Astrocyte of the cerebellum (primary cell): ENCODE measurements at regions of chr2 and their contacts with region 1.

Region 1: GRCh38 chr2:74876081-74876886 is 42.4 kb downstream of the HK2 start:
- DNase-seq: no peak
- H3K4me3 ChIP-seq: no peak overlapping the region
- CTCF ChIP-seq: peak; percentile 52

Region 2: DNA sequence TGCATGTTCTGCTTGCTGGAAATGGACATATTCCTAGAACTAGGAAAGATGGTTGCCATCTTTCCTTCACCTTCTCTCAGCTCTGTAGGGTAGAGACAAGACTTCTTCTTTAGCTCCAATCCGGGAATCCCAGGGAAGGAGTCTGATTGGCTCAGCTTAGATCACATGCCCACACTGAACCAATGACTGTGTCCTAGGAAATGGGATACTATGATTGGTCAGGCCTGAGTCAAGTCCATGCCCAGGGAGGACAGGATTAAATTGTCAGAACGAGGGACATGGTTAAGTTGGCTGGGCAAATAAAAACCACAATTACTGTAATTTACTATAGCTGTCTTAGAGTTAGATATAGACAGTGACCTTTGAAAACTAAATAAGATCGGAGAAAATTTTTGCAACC is 190.9 kb before region 1 on chr2:
- in situ Hi-C with region 1: loop called (anchors 5 kb)
- DNase-seq: no peak
- H3K4me3 ChIP-seq: no peak overlapping the region
- CTCF ChIP-seq: no peak

Region 3: GRCh38 chr2:75064691-75065396 is 188.6 kb after region 1 on chr2:
- in situ Hi-C with region 1: no loop called
- DNase-seq: no peak
- H3K4me3 ChIP-seq: no peak overlapping the region
- CTCF ChIP-seq: peak; percentile 83

Region 4: GRCh38 chr2:75180476-75180875 is 304.2 kb after region 1 on chr2:
- in situ Hi-C with region 1: no loop called
- DNase-seq: no peak
- H3K4me3 ChIP-seq: no peak overlapping the region
- CTCF ChIP-seq: no peak